HCT116 (cell line): ENCODE measurements at regions of chr1 and their contacts with region 1.

Region 1: GRCh38 chr1:13965770-13966398 is 265.9 kb downstream of the PRDM2 start:
- DNase-seq: peak; percentile 43
- ATAC-seq: peak; percentile 94
- H3K4me3 ChIP-seq: no peak overlapping the region
- H3K27ac ChIP-seq: no peak overlapping the region
- H3K4me1 ChIP-seq: no peaks in the 10 kb centered on the region
- H3K27me3 ChIP-seq: peaks cover 35% of the 10 kb centered on the region; the same call in 1 of the 2 replicates
- CTCF ChIP-seq: peak; percentile 42 to 58 (median 55)
- POLR2A ChIP-seq: no peak
- RAD21 ChIP-seq: peak; percentile 89

Region 2: DNA sequence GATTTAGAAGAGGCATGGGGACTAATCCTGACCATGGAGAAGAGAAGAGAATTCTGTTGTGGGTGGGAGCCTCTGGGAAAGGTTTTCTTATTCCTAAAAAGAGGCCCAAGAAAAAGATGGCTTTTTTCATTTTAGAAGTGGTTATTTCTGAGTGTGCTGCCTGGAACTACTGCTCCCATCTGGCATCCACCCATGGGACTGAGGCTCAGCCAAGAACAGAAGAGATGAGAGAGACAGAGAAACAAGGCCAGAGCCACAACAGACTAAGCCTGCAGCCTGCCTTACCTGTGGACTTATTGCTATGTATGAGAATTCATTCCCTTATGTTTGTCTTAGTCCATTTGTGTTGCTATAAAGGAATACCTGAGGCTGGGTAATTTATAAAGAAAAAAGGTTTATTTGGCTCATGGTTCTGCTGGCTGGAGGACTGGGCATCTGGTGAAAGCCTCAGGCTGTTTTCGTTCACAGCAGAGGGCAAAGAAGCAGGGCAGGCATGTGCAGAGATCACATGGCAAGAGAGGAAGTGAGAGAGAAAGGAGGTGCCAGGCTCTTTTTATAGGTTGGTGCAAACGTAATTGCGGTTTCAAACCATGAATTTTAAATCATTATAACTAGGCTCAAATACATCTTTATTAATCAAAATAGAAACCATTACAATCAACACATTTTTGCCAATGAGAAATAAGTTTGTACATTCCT is 323.4 kb before region 1 on chr1:
- CTCF ChIA-PET with region 1: no interaction called
- POLR2A ChIA-PET with region 1: no interaction called
- RAD21 ChIA-PET with region 1: no interaction called
- intact Hi-C with region 1: no loop called
- DNase-seq: no peak
- ATAC-seq: no peak
- H3K4me3 ChIP-seq: no peak overlapping the region
- H3K27ac ChIP-seq: no peak overlapping the region
- H3K4me1 ChIP-seq: no peaks in the 10 kb centered on the region
- H3K27me3 ChIP-seq: no peaks in the 10 kb centered on the region
- CTCF ChIP-seq: no peak
- POLR2A ChIP-seq: no peak
- RAD21 ChIP-seq: no peak

Region 3: GRCh38 chr1:13950637-13951036 is 15.2 kb before region 1 on chr1:
- CTCF ChIA-PET with region 1: no interaction called
- POLR2A ChIA-PET with region 1: no interaction called
- RAD21 ChIA-PET with region 1: no interaction called
- intact Hi-C with region 1: no loop called
- DNase-seq: peak; percentile 3
- ATAC-seq: peak; percentile 90
- H3K4me3 ChIP-seq: no peak overlapping the region
- H3K27ac ChIP-seq: no peak overlapping the region
- H3K4me1 ChIP-seq: no peaks in the 10 kb centered on the region
- H3K27me3 ChIP-seq: peaks cover 13% of the 10 kb centered on the region; the same call in 1 of the 2 replicates
- CTCF ChIP-seq: peak in 2 of 3 experiments; percentile 58 to 59; a peak in 4 of 6 replicates
- POLR2A ChIP-seq: no peak
- RAD21 ChIP-seq: no peak

Region 4: DNA sequence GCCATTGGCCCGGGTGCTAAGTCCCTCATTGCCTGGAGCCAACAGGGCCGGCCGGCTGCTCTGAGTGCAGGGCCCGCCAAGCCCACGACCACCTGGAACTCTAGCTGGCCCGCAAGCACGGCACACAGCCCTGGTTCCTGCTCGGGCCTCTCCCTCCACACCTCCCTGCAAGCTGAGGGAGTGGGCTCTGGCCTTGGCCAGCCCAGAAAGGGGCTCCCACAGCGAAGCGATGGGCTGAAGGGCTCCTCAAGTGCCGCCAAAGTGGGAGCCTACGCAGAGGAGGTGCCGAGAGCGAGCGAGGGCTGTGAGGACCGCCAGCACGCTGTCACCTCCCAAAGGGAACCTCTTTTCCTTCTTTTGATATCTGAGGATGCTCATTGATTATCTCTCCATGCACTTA is 17.5 kb after region 1 on chr1:
- CTCF ChIA-PET with region 1: no interaction called
- POLR2A ChIA-PET with region 1: no interaction called
- RAD21 ChIA-PET with region 1: no interaction called
- intact Hi-C with region 1: no loop called
- DNase-seq: no peak
- ATAC-seq: no peak
- H3K4me3 ChIP-seq: no peak overlapping the region
- H3K27ac ChIP-seq: no peak overlapping the region
- H3K4me1 ChIP-seq: no peaks in the 10 kb centered on the region
- H3K27me3 ChIP-seq: no peaks in the 10 kb centered on the region
- CTCF ChIP-seq: no peak
- POLR2A ChIP-seq: no peak
- RAD21 ChIP-seq: no peak

Region 5: GRCh38 chr1:14027099-14027498 is 61.2 kb after region 1 on chr1:
- CTCF ChIA-PET with region 1: no interaction called
- POLR2A ChIA-PET with region 1: no interaction called
- RAD21 ChIA-PET with region 1: no interaction called
- intact Hi-C with region 1: no loop called
- DNase-seq: no peak
- ATAC-seq: no peak
- H3K4me3 ChIP-seq: no peak overlapping the region
- H3K27ac ChIP-seq: no peak overlapping the region
- H3K4me1 ChIP-seq: no peaks in the 10 kb centered on the region
- H3K27me3 ChIP-seq: peaks cover 5% of the 10 kb centered on the region; the same call in 1 of the 2 replicates
- CTCF ChIP-seq: no peak
- POLR2A ChIP-seq: no peak
- RAD21 ChIP-seq: no peak

Region 6: DNA sequence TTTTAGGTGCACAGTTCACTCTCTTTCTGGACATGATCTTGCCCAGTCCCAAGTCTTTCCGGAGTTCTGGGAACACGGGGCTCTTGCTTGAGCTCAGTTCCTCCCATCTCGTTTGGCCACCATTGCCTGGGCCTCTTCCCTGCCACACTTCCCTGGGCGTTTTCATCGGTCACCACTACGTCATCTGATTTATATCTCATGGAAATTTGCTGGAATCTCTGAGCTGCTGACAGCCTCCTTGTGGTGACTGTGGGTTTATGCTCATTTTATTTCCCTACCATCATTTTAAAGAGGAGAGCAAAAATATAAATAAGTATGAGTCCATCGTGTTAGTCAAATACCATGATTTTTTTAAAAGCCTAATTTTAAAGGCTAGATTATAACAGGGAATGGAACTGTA is 183.5 kb after region 1 on chr1:
- CTCF ChIA-PET with region 1: no interaction called
- POLR2A ChIA-PET with region 1: no interaction called
- RAD21 ChIA-PET with region 1: no interaction called
- intact Hi-C with region 1: loop called (anchors 5 kb)
- DNase-seq: peak; percentile 31
- ATAC-seq: peak; percentile 69
- H3K4me3 ChIP-seq: no peak overlapping the region
- H3K27ac ChIP-seq: no peak overlapping the region
- H3K4me1 ChIP-seq: no peaks in the 10 kb centered on the region
- H3K27me3 ChIP-seq: no peaks in the 10 kb centered on the region
- CTCF ChIP-seq: peak; percentile 20 to 43 (median 25); a peak in 4 of 6 replicates
- POLR2A ChIP-seq: no peak
- RAD21 ChIP-seq: peak; percentile 26

Region 7: GRCh38 chr1:15094719-15095495 is 1129.0 kb after region 1 on chr1:
- CTCF ChIA-PET with region 1: no interaction called
- POLR2A ChIA-PET with region 1: no interaction called
- RAD21 ChIA-PET with region 1: no interaction called
- intact Hi-C with region 1: loop called (anchors 5 kb)
- DNase-seq: no peak
- ATAC-seq: no peak
- H3K4me3 ChIP-seq: no peak overlapping the region
- H3K27ac ChIP-seq: no peak overlapping the region
- H3K4me1 ChIP-seq: peaks cover 13 to 16% of the 10 kb centered on the region in 2 experiments
- H3K27me3 ChIP-seq: no peaks in the 10 kb centered on the region
- CTCF ChIP-seq: no peak
- POLR2A ChIP-seq: no peak
- RAD21 ChIP-seq: no peak